Activated CD8-positive, alpha-beta T cell treated with anti-CD3 and anti-CD28 coated beads for 36 hours (primary cell): ENCODE measurements at regions of chr1 and their contacts with region 1.

Region 1: DNA sequence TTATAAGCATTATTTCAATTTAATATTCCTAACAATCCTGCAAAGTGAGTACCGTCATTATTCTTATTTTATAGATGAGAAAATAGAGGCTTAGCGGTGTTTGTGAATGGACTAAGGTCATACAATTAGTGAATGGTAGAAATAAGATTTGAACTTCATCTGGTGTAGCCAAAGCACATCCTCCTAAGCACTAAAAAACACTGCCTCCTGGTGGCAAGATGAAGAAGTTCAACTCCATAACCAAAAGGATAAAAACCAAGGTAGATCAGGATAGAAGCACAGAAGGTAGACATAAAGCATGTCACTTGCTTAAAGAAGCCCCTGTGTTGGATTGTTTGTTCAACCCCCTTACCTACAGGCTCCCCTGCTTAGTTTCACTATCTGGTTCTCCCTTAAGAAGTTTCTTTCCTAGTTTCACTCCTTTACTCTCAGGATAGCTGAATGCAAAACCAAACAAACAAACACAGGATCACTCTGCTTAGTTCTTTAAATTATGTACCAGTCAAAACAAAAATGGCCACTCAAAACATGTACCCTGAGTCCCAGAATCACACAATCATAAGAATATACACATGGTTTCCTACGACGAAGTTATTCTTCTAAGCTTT is 12.7 kb upstream of the AIM2 start:
- DNase-seq: no peak
- ATAC-seq: peak; percentile 25
- H3K4me3 Mint-ChIP-seq: no peak overlapping the region
- H3K27ac Mint-ChIP-seq: peak overlapping the region; percentile 64
- H3K4me1 Mint-ChIP-seq: peaks cover 44% of the 10 kb centered on the region
- H3K27me3 Mint-ChIP-seq: no peaks in the 10 kb centered on the region
- CTCF ChIP-seq: peak; percentile 83

Region 2: GRCh38 chr1:159077120-159077961 is 11.9 kb before region 1 on chr1:
- CTCF ChIA-PET with region 1: interaction called, 46 read pairs
- POLR2A ChIA-PET with region 1: interaction called, 12 read pairs
- intact Hi-C with region 1: no loop called
- DNase-seq: peak; percentile 97
- ATAC-seq: peak; percentile 83
- H3K4me3 Mint-ChIP-seq: peak overlapping the region; percentile 77
- H3K27ac Mint-ChIP-seq: peak overlapping the region; percentile 94
- H3K4me1 Mint-ChIP-seq: peaks cover 24% of the 10 kb centered on the region
- H3K27me3 Mint-ChIP-seq: no peaks in the 10 kb centered on the region
- CTCF ChIP-seq: no peak